ENCODE measurements at regions of chr3 and their contacts with region 1.

Region 1: GRCh38 chr3:183116025-183116614 is 16.8 kb upstream of the MCCC1 start:
- DNase-seq: no peak
- ATAC-seq: peak; percentile 96
- H3K4me3 ChIP-seq: peak overlapping the region; percentile 45
- H3K27ac ChIP-seq: no peak overlapping the region
- H3K4me1 ChIP-seq: peaks cover 3% of the 10 kb centered on the region; the same call in 1 of the 2 replicates
- H3K27me3 ChIP-seq: no peaks in the 10 kb centered on the region
- CTCF ChIP-seq: no peak
- EP300 ChIP-seq: no peak
- POLR2A ChIP-seq: peak; percentile 50; the same call in 1 of the 2 replicates
- RAD21 ChIP-seq: no peak

Region 2: GRCh38 chr3:183377307-183377959 is 261.3 kb after region 1 on chr3:
- CTCF ChIA-PET with region 1: interaction called, 229 read pairs
- POLR2A ChIA-PET with region 1: no interaction called
- RAD21 ChIA-PET with region 1: interaction called, 136 read pairs
- SMC1A ChIA-PET with region 1: interaction called, 187 read pairs
- in situ Hi-C with region 1: no loop called
- intact Hi-C with region 1: no loop called
- DNase-seq: no peak
- ATAC-seq: peak; percentile 46
- H3K4me3 ChIP-seq: no peak overlapping the region
- H3K27ac ChIP-seq: no peak overlapping the region
- H3K4me1 ChIP-seq: peaks cover 11% of the 10 kb centered on the region; the same call in 1 of the 2 replicates
- H3K27me3 ChIP-seq: no peaks in the 10 kb centered on the region
- CTCF ChIP-seq: no peak
- EP300 ChIP-seq: no peak
- POLR2A ChIP-seq: no peak
- RAD21 ChIP-seq: no peak